ENCODE measurements at regions of chr4 and their contacts with region 1.

Region 1: DNA sequence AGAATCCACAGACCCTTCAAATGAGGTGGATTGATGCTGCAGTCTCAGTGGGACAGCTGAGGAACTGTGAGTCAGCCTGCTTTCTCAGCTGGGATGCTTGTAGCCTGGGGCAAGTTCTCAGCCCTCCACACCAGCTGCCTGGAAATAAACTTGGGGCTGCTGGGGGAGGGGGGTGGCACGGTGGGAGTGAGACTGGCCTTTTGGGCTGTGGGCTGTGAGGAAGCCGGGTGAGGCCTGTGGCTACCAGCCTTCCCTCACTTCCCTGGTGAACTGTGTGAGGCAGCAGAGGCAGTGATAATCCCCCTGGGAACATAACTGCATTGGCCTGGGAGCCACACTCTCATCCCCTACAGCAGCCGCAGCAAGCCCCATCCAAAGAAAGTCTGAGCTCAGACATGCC is 114.5 kb upstream of the GUCY1A1 start:
- DNase-seq: no peak
- H3K4me3 ChIP-seq: no peak overlapping the region
- H3K27ac ChIP-seq: no peak overlapping the region
- H3K4me1 ChIP-seq: no peaks in the 10 kb centered on the region
- H3K27me3 ChIP-seq: no peaks in the 10 kb centered on the region
- CTCF ChIP-seq: no peak
- POLR2A ChIP-seq: no peak

Region 2: GRCh38 chr4:153971878-153972277 is 1580.3 kb before region 1 on chr4:
- intact Hi-C with region 1: loop called (anchors 5 kb)
- DNase-seq: no peak
- H3K4me3 ChIP-seq: no peak overlapping the region
- H3K27ac ChIP-seq: no peak overlapping the region
- H3K4me1 ChIP-seq: no peaks in the 10 kb centered on the region
- H3K27me3 ChIP-seq: no peaks in the 10 kb centered on the region
- CTCF ChIP-seq: no peak
- POLR2A ChIP-seq: no peak

Measured in vagina (tissue), 2 donors.